GM12878 (cell line): ENCODE measurements at regions of chr2 and their contacts with region 1.

Region 1: GRCh38 chr2:27050281-27050995 is 1.0 kb upstream of the AGBL5 start:
- DNase-seq: peak; percentile 99
- ATAC-seq: peak; percentile 79
- H3K4me3 ChIP-seq: peak overlapping the region; percentile 99
- H3K27ac ChIP-seq: peak overlapping the region; percentile 82
- H3K4me1 ChIP-seq: peaks cover 9% of the 10 kb centered on the region
- H3K27me3 ChIP-seq: no peaks in the 10 kb centered on the region
- CTCF ChIP-seq: peak; percentile 5 to 33 (median 6); a peak in 1 of 6 replicates
- EP300 ChIP-seq: peak in 1 of 2 experiments; percentile 69; a peak in 1 of 4 replicates
- POLR2A ChIP-seq: peak; percentile 70
- RAD21 ChIP-seq: no peak

Region 2: DNA sequence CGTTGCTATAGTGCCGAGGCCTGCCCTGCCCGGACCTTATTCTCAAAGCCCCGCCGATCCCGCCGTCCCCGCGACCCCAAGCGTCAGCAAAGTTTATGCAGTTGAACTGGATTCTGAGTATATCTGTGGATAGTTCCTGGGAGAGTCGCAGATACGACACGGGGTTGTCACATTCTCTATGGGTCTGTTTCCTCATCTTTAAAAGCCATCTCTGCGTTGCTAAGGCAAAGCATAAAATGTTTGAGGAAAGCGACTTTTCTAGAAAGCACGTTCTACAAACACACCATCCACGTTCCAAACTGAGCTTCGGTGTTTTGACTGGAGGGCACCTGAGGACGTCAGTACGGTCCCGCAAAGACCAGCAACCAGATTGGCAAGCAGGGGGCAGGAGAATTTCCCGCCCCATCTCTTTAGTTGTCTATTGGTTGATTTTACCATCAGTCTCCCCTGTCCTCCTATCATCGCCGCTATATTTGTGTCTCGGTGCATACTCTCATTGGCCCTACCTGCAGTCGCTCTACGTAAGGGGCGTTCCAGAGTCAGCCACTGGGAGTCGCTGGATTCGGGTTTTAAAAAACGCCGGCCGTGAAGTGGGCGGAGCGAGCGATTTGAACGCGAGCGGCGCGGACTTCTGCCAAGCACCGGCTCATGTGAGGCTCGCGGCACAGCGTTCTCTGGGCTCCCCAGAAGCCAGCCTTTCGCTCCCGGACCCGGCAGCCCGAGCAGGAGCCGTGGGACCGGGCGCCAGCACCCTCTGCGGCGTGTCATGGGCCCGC is 264.8 kb before region 1 on chr2 and contains the start of gene CENPA:
- CTCF ChIA-PET with region 1: no interaction called
- POLR2A ChIA-PET with region 1: interaction called, 5 read pairs
- RAD21 ChIA-PET with region 1: no interaction called
- SMC1A ChIA-PET with region 1: no interaction called
- in situ Hi-C with region 1: no loop called
- intact Hi-C with region 1: loop called (anchors 5 kb)
- DNase-seq: peak; percentile 99
- ATAC-seq: peak; percentile 99
- H3K4me3 ChIP-seq: peak within 1 kb of the TSS; percentile 79
- H3K27ac ChIP-seq: peak within 1 kb of the TSS; percentile 81
- H3K4me1 ChIP-seq: peaks cover 3% of the 10 kb centered on the region; the same call in 1 of the 2 replicates
- H3K27me3 ChIP-seq: no peaks in the 10 kb centered on the region
- CTCF ChIP-seq: 0 out of 6 replicates have a peak, but pooled peaks of 1 of the 3 experiments have one; percentile 1
- EP300 ChIP-seq: no peak
- POLR2A ChIP-seq: peak; percentile 87
- RAD21 ChIP-seq: no peak
- polyA plus RNA-seq, gene CENPA: 8.1 to 19.0 TPM

Region 3: DNA sequence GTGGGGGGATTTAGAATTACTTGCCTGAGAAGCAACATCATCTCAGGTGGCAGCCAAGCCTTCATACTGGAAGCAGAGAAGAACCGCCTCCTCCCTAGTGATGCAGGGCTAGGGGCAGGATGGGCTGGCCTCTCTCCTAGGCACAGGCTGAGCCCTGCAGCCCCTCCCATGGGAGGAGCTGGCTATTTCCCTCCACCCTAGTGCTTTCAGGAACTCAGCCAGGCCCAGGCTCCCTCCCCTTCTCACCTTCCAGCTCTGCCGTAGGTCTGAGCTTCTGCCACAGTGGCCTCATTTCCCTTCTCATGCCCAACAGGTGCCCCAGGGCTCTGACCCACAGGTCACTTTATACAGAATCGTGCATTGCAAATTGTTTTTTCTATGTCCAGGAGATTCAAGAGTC is 233.5 kb before region 1 on chr2:
- CTCF ChIA-PET with region 1: no interaction called
- POLR2A ChIA-PET with region 1: no interaction called
- RAD21 ChIA-PET with region 1: no interaction called
- SMC1A ChIA-PET with region 1: no interaction called
- in situ Hi-C with region 1: no loop called
- intact Hi-C with region 1: no loop called
- DNase-seq: no peak
- ATAC-seq: no peak
- H3K4me3 ChIP-seq: no peak overlapping the region
- H3K27ac ChIP-seq: no peak overlapping the region
- H3K4me1 ChIP-seq: no peaks in the 10 kb centered on the region
- H3K27me3 ChIP-seq: no peaks in the 10 kb centered on the region
- CTCF ChIP-seq: no peak
- EP300 ChIP-seq: no peak
- POLR2A ChIP-seq: no peak
- RAD21 ChIP-seq: no peak

Region 4: DNA sequence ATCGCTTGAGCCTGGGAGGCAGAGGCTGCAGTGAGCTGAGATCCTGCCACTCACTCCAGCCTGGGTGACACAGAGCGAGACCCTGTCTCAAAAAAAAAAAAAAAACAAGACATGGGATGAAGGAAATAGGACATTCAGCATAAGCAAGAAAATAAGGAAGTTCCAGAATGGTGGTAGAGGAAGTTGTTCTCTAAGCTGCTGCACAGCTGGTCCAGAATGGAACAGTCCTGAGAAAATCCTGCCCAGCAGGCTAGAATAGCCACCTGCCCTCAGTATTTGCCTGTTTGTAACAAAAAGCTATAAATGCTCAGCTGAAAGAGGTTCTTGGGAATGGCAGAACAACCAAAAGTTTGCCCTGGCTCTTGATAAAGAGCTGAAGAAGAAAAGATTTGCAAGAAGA is 91.1 kb before region 1 on chr2:
- CTCF ChIA-PET with region 1: interaction called, 22 read pairs
- POLR2A ChIA-PET with region 1: no interaction called
- RAD21 ChIA-PET with region 1: interaction called, 4 read pairs
- SMC1A ChIA-PET with region 1: interaction called, 9 read pairs
- in situ Hi-C with region 1: no loop called
- intact Hi-C with region 1: no loop called
- DNase-seq: no peak
- ATAC-seq: no peak
- H3K4me3 ChIP-seq: no peak overlapping the region
- H3K27ac ChIP-seq: no peak overlapping the region
- H3K4me1 ChIP-seq: no peaks in the 10 kb centered on the region
- H3K27me3 ChIP-seq: no peaks in the 10 kb centered on the region; a peak in 2 of 4 replicates
- CTCF ChIP-seq: no peak
- EP300 ChIP-seq: no peak
- POLR2A ChIP-seq: no peak
- RAD21 ChIP-seq: no peak

Region 5: GRCh38 chr2:27032495-27033252 is 17.8 kb before region 1 on chr2 and contains the start of gene TMEM214:
- CTCF ChIA-PET with region 1: interaction called, 26 read pairs
- POLR2A ChIA-PET with region 1: interaction called, 45 read pairs
- RAD21 ChIA-PET with region 1: interaction called, 11 read pairs
- SMC1A ChIA-PET with region 1: interaction called, 18 read pairs
- in situ Hi-C with region 1: no loop called
- intact Hi-C with region 1: loop called (anchors 1 kb)
- DNase-seq: peak; percentile 39
- ATAC-seq: peak; percentile 98
- H3K4me3 ChIP-seq: peak within 1 kb of the TSS; percentile 99
- H3K27ac ChIP-seq: peak within 1 kb of the TSS; percentile 91
- H3K4me1 ChIP-seq: peaks cover 22% of the 10 kb centered on the region
- H3K27me3 ChIP-seq: no peaks in the 10 kb centered on the region
- CTCF ChIP-seq: no peak
- EP300 ChIP-seq: no peak
- POLR2A ChIP-seq: peak; percentile 95
- RAD21 ChIP-seq: no peak
- polyA plus RNA-seq, gene TMEM214: 10.4 to 17.6 TPM

Region 6: DNA sequence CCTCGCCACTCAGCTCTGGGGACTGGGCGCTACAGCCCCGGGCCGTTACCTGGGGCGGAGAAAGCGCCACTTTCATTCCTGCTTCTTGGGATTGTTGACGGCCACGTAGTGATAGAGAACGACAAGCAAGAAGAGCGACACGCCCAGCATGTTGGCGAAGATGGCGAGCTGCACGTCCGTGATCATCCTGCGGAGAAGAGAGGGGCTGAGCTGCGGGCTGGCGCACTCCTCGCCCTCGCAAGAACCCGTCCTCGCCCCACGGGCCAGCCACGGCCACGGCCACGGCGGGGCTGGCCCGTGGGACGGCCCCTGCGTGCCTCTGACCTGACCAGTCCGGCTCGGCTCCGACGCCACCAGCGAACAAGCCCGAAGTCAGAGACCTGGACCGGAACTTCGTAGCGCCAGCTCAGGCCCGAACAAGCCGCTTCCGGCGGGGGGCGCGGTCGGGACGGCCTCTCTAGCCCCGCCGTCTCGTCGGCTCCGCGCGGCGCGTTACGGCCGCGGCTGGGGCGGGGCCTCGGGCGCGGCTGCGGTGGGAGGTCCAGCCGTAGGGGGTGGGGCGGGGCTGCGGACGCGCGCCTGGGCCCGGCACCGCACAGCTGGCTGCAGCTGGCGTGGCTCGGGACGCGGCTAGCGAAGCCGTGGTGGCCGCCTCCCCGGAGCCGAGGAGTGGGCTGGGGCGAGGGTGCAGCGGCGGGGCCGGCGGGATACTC is 21.0 kb after region 1 on chr2 and contains the start of gene OST4:
- CTCF ChIA-PET with region 1: interaction called, 13 read pairs
- POLR2A ChIA-PET with region 1: interaction called, 139 read pairs
- RAD21 ChIA-PET with region 1: interaction called, 31 read pairs
- SMC1A ChIA-PET with region 1: interaction called, 33 read pairs
- in situ Hi-C with region 1: no loop called
- intact Hi-C with region 1: loop called (anchors 1 kb)
- DNase-seq: no peak
- ATAC-seq: peak; percentile 91
- H3K4me3 ChIP-seq: peak within 1 kb of the TSS; percentile 85
- H3K27ac ChIP-seq: peak within 1 kb of the TSS; percentile 94
- H3K4me1 ChIP-seq: peaks cover 37% of the 10 kb centered on the region
- H3K27me3 ChIP-seq: no peaks in the 10 kb centered on the region
- CTCF ChIP-seq: no peak
- EP300 ChIP-seq: no peak
- POLR2A ChIP-seq: peak; percentile 98
- RAD21 ChIP-seq: no peak
- polyA plus RNA-seq, gene OST4: 1,505 to 1,543 TPM

Region 7: GRCh38 chr2:27079233-27080139 is 29.0 kb after region 1 on chr2:
- CTCF ChIA-PET with region 1: interaction called, 28 read pairs
- POLR2A ChIA-PET with region 1: interaction called, 139 read pairs
- RAD21 ChIA-PET with region 1: interaction called, 21 read pairs
- SMC1A ChIA-PET with region 1: interaction called, 33 read pairs
- in situ Hi-C with region 1: no loop called
- intact Hi-C with region 1: no loop called
- DNase-seq: no peak
- ATAC-seq: no peak
- H3K4me3 ChIP-seq: no peak overlapping the region
- H3K27ac ChIP-seq: no peak overlapping the region
- H3K4me1 ChIP-seq: peaks cover 38% of the 10 kb centered on the region
- H3K27me3 ChIP-seq: no peaks in the 10 kb centered on the region
- CTCF ChIP-seq: no peak
- EP300 ChIP-seq: no peak
- POLR2A ChIP-seq: no peak
- RAD21 ChIP-seq: no peak

Region 8: GRCh38 chr2:27086090-27086723 is 35.8 kb after region 1 on chr2:
- CTCF ChIA-PET with region 1: interaction called, 28 read pairs
- POLR2A ChIA-PET with region 1: interaction called, 27 read pairs
- RAD21 ChIA-PET with region 1: interaction called, 21 read pairs
- SMC1A ChIA-PET with region 1: interaction called, 19 read pairs
- in situ Hi-C with region 1: no loop called
- intact Hi-C with region 1: loop called (anchors 1 kb)
- DNase-seq: peak; percentile 73
- ATAC-seq: peak; percentile 92
- H3K4me3 ChIP-seq: peak overlapping the region; percentile 85
- H3K27ac ChIP-seq: peak overlapping the region; percentile 67
- H3K4me1 ChIP-seq: peaks cover 19% of the 10 kb centered on the region
- H3K27me3 ChIP-seq: no peaks in the 10 kb centered on the region
- CTCF ChIP-seq: peak; percentile 77 to 95 (median 83)
- EP300 ChIP-seq: no peak
- POLR2A ChIP-seq: peak; percentile 80
- RAD21 ChIP-seq: peak; percentile 47